ENCODE measurements at regions of chr5 and their contacts with region 1.

Region 1: GRCh38 chr5:181159286-181159829 is 12.0 kb downstream of the OR2V2 start:
- DNase-seq: peak; percentile 82 to 89 (median 87)
- H3K4me3 ChIP-seq: no peak overlapping the region
- H3K4me3 Mint-ChIP-seq: peak overlapping the region; percentile 74 to 89 (median 82)
- H3K27ac ChIP-seq: peak overlapping the region; percentile 90
- H3K27ac Mint-ChIP-seq: peak overlapping the region; percentile 92 to 99 (median 97)
- H3K4me1 ChIP-seq: peaks cover 23% of the 10 kb centered on the region
- H3K4me1 Mint-ChIP-seq: peaks cover 12 to 35% (median 21%) of the 10 kb centered on the region in 4 donors
- H3K27me3 ChIP-seq: peaks cover 2% of the 10 kb centered on the region
- H3K27me3 Mint-ChIP-seq: peaks cover 7 to 26% of the 10 kb centered on the region in 2 donors

Region 2: DNA sequence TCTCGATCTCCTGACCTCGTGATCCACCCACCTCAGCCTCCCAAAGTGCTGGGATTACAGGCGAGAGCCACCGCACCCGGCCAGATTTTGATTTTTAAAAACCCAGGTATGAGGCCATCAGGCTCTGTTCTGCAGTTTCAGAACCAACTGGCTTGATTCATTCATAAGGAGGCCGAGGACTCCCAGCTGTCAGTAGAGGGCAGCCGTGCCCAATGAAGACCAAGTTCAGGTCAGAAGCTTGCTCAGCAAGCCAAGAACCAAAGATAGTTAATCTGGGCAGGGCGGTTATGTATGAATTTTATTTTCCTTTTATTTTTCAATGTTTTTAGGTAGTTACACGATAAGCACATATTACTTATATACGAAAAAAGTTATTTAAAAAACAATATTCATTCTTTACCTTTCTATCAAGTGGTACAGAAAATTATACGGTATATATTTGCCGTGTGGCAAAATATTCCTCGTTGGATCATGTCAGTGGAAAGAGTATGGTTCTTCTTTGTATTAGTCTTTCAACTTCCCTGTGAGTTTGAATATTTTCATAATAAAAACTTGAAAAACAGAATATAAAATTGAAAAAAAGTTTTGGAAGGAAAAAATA is 374.8 kb before region 1 on chr5:
- CTCF ChIA-PET with region 1: interaction called, 4 read pairs
- POLR2A ChIA-PET with region 1: no interaction called
- intact Hi-C with region 1: loop called (anchors 1 kb)
- DNase-seq: peak; percentile 68 to 81 (median 72)
- H3K4me3 ChIP-seq: no peak overlapping the region
- H3K4me3 Mint-ChIP-seq: no peak overlapping the region
- H3K27ac ChIP-seq: no peak overlapping the region
- H3K27ac Mint-ChIP-seq: peak overlapping the region in 2 of 7 donors; percentile 6 to 14
- H3K4me1 ChIP-seq: peaks cover 8% of the 10 kb centered on the region
- H3K4me1 Mint-ChIP-seq: peaks cover 10 to 25% (median 18%) of the 10 kb centered on the region in 4 donors
- H3K27me3 ChIP-seq: no peaks in the 10 kb centered on the region
- H3K27me3 Mint-ChIP-seq: no peaks in the 10 kb centered on the region

Region 3: DNA sequence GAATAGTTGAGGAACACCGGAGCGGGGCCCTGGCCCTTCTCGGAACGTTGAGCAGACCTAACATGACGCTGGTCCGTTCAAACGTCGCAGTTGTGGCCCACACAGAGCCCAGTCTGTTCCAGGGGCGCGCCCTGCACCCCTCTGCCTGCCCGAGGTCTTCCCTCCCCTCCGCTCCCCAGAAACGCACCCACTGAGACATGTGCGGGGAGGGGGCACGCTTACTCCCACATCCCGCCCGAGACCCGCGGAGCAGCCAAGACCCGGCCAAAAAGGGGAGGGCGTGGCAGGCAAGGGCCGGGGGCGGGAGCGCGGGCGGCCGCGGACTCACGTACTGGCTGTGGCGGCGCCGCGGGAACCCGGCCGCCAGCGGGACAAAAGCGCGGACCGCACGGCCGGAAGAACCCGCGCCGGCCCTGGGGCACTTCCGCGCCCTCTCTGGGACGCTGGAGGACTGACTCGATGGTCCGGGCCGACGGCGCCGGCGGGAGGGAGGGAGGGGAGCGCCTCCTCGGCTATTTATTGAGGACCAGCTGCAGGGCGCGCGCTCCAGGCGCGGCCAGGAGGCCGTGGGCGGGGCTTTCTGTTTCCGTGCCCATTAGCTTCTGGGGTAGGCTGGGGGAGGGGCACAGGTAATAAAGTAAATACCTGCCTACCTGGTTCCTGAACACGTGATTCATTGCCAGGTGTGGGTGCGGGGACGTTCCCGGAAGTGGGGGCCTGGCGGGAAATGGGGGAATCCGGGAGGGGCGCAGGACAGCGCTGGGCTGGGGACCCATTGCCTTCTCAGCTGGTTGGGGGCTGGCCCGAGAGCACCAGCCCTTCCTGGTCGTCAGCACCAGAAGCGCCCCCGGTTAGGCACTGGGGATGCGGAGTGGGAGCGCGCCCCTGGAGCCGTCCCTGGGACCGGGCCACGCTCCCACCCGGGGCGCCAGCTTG is 298.2 kb before region 1 on chr5 and contains the start of gene ZFP62:
- CTCF ChIA-PET with region 1: no interaction called
- POLR2A ChIA-PET with region 1: no interaction called
- intact Hi-C with region 1: loop called (anchors 1 kb)
- DNase-seq: peak; percentile 86 to 89 (median 86)
- H3K4me3 ChIP-seq: peak within 1 kb of the TSS; percentile 36 to 96
- H3K4me3 Mint-ChIP-seq: peak within 1 kb of the TSS; percentile 90 to 95 (median 92)
- H3K27ac ChIP-seq: peak within 1 kb of the TSS; percentile 67
- H3K27ac Mint-ChIP-seq: peak within 1 kb of the TSS; percentile 96 to 98 (median 97)
- H3K4me1 ChIP-seq: peaks cover 9% of the 10 kb centered on the region
- H3K4me1 Mint-ChIP-seq: peaks cover 13 to 31% (median 19%) of the 10 kb centered on the region in 4 donors
- H3K27me3 ChIP-seq: no peaks in the 10 kb centered on the region
- H3K27me3 Mint-ChIP-seq: peaks cover 0 to 2% of the 10 kb centered on the region in 2 donors
- total RNA-seq, gene ZFP62: 71.1 to 71.7 TPM

Region 4: DNA sequence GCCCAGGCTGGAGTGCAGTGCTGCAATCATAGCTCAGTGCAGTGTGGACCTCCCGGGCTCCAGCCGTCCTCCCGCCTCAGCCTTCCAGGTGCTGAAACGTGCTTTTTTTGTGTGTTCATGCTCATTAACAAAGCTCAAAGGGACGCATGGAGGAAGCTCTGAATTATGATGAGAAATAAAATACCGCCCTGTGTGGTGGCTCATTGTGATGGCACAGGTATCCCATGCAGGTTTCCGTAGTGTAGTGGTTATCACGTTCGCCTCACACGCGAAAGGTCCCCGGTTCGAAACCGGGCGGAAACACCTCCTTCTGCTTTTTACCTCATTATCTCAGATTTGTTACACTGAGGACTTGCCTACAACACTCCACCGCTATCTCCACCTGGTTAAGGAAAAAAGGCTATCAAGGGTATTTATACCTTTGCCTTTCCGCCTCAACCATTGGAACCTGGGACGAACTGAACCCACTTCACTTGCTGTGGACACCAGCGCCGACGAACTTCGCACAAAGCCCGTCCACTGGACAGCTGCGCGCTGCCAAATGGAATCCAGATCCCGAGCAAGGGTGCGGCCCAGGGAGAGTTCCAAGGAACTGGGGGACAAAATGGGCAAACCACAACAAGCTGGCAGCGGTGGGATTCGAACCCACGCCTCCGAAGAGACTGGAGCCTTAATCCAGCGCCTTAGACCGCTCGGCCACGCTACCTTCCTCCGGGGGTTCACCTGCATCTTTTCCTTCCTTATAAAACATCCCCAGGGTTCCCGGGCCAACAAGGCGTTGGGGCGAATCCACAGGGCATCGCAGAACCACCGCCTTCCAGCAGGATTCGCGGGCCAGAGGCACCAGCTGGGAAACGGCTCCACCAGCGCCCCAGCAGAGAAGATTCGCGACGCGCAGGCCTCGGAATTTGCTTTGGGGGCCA is 14.3 kb after region 1 on chr5:
- CTCF ChIA-PET with region 1: interaction called, 11 read pairs
- POLR2A ChIA-PET with region 1: interaction called, 3 read pairs
- intact Hi-C with region 1: no loop called
- DNase-seq: peak; percentile 46 to 67 (median 57)
- H3K4me3 ChIP-seq: no peak overlapping the region
- H3K4me3 Mint-ChIP-seq: peak overlapping the region; percentile 25 to 89 (median 84)
- H3K27ac ChIP-seq: no peak overlapping the region
- H3K27ac Mint-ChIP-seq: peak overlapping the region in 6 of 7 donors; percentile 64 to 94 (median 73)
- H3K4me1 ChIP-seq: peaks cover 17% of the 10 kb centered on the region
- H3K4me1 Mint-ChIP-seq: peaks cover 7 to 34% (median 23%) of the 10 kb centered on the region in 4 donors
- H3K27me3 ChIP-seq: peaks cover 48% of the 10 kb centered on the region
- H3K27me3 Mint-ChIP-seq: peaks cover 37 to 49% of the 10 kb centered on the region in 2 donors

Region 5: DNA sequence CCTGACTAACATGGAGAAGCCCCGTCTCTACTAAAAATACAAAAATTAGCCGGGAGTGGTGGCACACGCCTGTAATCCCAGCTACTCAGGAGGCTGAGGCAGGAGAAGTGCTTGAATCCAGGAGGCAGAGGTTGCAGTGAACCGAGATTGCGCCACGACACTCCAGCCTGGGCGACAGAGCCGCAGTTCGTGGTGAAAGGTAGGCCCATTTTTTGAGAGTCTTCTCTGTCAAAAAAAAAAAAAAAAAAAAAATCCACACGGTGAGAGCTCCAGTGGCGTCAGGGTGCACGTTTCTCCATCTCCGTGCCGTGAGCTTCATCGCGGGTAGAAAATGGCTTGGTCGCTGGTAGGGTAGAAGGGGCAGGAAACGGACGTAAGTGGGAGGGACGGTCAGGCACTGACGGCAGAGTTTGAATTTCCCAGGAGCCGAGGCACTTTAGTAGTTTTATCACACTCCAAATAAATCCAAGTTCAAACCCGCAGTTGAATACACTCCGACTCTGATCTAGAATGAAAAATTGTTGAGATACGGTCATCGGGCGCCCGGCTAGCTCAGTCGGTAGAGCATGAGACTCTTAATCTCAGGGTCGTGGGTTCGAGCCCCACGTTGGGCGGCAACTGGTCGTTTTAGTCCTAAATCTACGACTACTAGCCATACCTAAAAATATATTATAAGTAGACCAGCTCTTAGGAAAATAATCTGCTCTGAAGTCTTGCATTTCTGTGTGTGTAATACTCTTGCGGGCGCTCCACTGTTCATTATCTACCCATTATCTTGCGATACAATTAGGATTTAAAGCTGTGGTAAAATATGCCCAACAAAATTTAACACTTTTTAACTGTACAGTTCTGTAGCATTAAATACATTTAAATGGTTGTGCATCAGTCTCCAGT is 48.1 kb after region 1 on chr5:
- CTCF ChIA-PET with region 1: no interaction called
- POLR2A ChIA-PET with region 1: no interaction called
- intact Hi-C with region 1: no loop called
- DNase-seq: peak; percentile 76 to 88 (median 81)
- H3K4me3 ChIP-seq: peak overlapping the region; percentile 71
- H3K4me3 Mint-ChIP-seq: peak overlapping the region; percentile 88 to 97 (median 92)
- H3K27ac ChIP-seq: peak overlapping the region; percentile 67
- H3K27ac Mint-ChIP-seq: peak overlapping the region; percentile 91 to 100 (median 98)
- H3K4me1 ChIP-seq: peaks cover 31% of the 10 kb centered on the region
- H3K4me1 Mint-ChIP-seq: peaks cover 24 to 47% (median 32%) of the 10 kb centered on the region in 4 donors
- H3K27me3 ChIP-seq: no peaks in the 10 kb centered on the region
- H3K27me3 Mint-ChIP-seq: peaks cover 7 to 10% of the 10 kb centered on the region in 2 donors

Measured in CD4-positive, alpha-beta memory T cell (primary cell).